CD4-positive, alpha-beta memory T cell (primary cell): ENCODE measurements at regions of chr19 and their contacts with region 1.

Region 1: DNA sequence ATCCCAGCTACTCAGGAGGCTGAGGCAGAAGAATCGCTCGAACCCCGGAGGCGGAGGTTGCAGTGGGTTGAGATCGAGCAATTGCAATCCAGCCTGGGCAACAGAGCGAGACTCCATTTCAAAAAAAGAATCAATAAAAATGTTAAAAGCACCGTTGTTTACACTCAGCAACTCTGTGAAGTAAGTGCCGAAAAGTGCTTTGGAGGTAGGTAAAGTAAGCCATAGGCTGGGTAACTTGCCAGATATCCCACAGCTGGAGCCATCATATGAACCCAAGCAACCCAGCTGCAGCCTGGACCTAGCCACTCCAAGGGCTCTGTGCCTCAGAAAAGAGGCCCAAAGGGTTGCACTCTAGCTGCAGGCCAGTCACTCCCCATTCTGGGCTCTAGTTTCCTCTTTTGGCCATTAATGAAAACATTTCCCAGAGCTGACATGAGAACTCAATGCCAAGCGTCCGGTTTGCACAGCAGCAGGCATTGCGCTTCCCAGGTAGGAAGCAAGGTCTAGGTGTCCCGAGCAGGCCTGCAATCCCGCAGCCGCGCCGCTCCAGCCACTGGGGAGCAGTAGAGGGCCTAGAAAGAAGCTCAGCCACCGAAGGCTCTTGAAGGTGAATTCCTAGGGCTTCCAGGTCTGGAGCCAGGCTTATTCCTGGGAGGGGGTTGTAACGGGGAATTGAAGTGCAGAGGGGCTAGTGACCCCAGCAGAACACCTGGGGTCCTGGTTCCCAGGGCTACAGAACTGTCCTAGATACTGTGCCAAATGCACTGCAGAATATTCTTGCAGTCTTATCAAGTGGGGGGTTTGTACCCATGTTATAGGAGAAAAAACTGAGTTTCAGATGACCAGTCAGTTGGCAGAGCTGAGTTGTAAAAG is 4.1 kb upstream of the CD79A start:
- DNase-seq: peak; percentile 59 to 70 (median 63)
- H3K4me3 ChIP-seq: no peak overlapping the region
- H3K4me3 Mint-ChIP-seq: peak overlapping the region; percentile 26 to 85 (median 68)
- H3K27ac ChIP-seq: peak overlapping the region; percentile 66
- H3K27ac Mint-ChIP-seq: peak overlapping the region; percentile 92 to 99 (median 95)
- H3K4me1 ChIP-seq: peaks cover 98% of the 10 kb centered on the region
- H3K4me1 Mint-ChIP-seq: peaks cover 45 to 97% (median 68%) of the 10 kb centered on the region in 4 donors
- H3K27me3 ChIP-seq: no peaks in the 10 kb centered on the region
- H3K27me3 Mint-ChIP-seq: no peaks in the 10 kb centered on the region

Region 2: DNA sequence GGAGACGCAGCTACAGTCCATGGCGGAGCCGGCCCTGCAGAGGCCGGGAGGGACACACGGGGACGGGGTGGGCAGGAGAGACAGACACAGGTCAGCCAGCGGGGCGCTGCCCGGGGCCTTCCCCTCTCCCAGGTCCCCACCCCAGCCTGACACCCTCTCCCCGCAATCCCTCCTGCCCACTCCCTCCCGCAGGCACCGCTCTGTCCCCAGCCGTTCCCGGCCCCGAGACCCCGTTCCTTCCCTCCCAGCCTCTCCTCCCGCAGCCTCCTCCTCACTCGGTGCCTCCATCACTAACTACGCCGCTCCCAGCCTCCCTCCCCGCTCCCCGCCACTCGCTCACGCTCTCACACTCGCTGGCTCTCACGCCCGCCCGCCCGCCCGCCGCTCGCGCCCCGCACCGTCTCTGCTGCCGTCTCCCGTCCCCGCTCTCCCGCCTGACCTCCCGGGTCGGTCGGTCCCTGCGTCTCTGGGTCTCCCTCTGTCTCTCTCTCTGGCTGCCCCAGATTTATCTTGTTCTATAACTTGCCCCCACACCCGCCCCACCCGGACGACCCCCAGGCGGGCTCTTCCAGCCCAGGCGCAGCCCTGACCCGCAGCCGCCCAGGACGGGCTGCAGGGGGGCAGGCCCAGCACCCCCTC is 40.0 kb after region 1 on chr19:
- CTCF ChIA-PET with region 1: interaction called, 4 read pairs
- POLR2A ChIA-PET with region 1: interaction called, 42 read pairs
- intact Hi-C with region 1: no loop called
- DNase-seq: peak in 2 of 5 donors; percentile 39 to 43
- H3K4me3 ChIP-seq: no peak overlapping the region
- H3K4me3 Mint-ChIP-seq: peak overlapping the region in 4 of 8 donors; percentile 9 to 57 (median 32)
- H3K27ac ChIP-seq: no peak overlapping the region
- H3K27ac Mint-ChIP-seq: peak overlapping the region in 3 of 7 donors; percentile 43 to 75 (median 67)
- H3K4me1 ChIP-seq: peaks cover 45% of the 10 kb centered on the region
- H3K4me1 Mint-ChIP-seq: peaks cover 25 to 51% (median 26%) of the 10 kb centered on the region in 4 donors
- H3K27me3 ChIP-seq: peaks cover 23% of the 10 kb centered on the region
- H3K27me3 Mint-ChIP-seq: peaks cover 7 to 14% of the 10 kb centered on the region in 2 donors

Region 3: GRCh38 chr19:41934849-41935374 is 61.9 kb after region 1 on chr19:
- CTCF ChIA-PET with region 1: interaction called, 27 read pairs
- POLR2A ChIA-PET with region 1: interaction called, 36 read pairs
- intact Hi-C with region 1: loop called (anchors 1 kb)
- DNase-seq: peak; percentile 65 to 82 (median 70)
- H3K4me3 ChIP-seq: no peak overlapping the region
- H3K4me3 Mint-ChIP-seq: peak overlapping the region in 2 of 8 donors; percentile 51 to 64
- H3K27ac ChIP-seq: no peak overlapping the region
- H3K27ac Mint-ChIP-seq: peak overlapping the region; percentile 38 to 95 (median 89)
- H3K4me1 ChIP-seq: peaks cover 37% of the 10 kb centered on the region
- H3K4me1 Mint-ChIP-seq: peaks cover 25 to 61% (median 40%) of the 10 kb centered on the region in 4 donors
- H3K27me3 ChIP-seq: no peaks in the 10 kb centered on the region
- H3K27me3 Mint-ChIP-seq: peaks cover 1 to 6% of the 10 kb centered on the region in 2 donors

Region 4: DNA sequence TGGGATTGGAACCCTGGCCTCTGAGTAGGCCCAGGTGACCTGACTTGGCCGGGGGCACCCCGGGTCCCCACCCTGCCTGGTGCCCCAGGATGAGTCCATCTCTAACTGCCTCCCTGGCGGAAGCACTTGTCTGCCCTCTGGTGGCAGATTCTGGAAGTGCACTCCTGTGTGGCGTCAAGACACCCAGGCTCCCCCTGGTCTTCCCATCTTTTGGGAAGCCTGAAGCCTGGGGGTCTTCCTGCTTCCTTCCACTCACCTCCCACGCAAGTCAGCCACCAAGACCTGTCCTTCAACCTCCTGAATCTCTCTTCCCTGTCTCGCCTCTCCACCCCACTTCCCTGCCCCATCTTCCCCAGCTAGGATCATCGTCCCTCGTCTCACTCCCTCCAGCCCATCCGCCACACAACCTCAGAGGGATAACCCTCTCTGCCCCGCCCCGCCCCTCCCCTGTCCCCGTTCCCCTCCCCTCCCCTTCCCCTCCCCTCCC is 78.7 kb after region 1 on chr19:
- CTCF ChIA-PET with region 1: interaction called, 69 read pairs
- POLR2A ChIA-PET with region 1: interaction called, 69 read pairs
- intact Hi-C with region 1: loop called (anchors 1 kb)
- DNase-seq: peak; percentile 72 to 83 (median 76)
- H3K4me3 ChIP-seq: no peak overlapping the region
- H3K4me3 Mint-ChIP-seq: peak overlapping the region in 2 of 8 donors; percentile 5 to 42
- H3K27ac ChIP-seq: no peak overlapping the region
- H3K27ac Mint-ChIP-seq: peak overlapping the region; percentile 42 to 90 (median 81)
- H3K4me1 ChIP-seq: peaks cover 12% of the 10 kb centered on the region
- H3K4me1 Mint-ChIP-seq: peaks cover 10 to 30% (median 15%) of the 10 kb centered on the region in 4 donors
- H3K27me3 ChIP-seq: no peaks in the 10 kb centered on the region
- H3K27me3 Mint-ChIP-seq: no peaks in the 10 kb centered on the region